ENCODE measurements at regions of chr5 and their contacts with region 1.

Region 1: DNA sequence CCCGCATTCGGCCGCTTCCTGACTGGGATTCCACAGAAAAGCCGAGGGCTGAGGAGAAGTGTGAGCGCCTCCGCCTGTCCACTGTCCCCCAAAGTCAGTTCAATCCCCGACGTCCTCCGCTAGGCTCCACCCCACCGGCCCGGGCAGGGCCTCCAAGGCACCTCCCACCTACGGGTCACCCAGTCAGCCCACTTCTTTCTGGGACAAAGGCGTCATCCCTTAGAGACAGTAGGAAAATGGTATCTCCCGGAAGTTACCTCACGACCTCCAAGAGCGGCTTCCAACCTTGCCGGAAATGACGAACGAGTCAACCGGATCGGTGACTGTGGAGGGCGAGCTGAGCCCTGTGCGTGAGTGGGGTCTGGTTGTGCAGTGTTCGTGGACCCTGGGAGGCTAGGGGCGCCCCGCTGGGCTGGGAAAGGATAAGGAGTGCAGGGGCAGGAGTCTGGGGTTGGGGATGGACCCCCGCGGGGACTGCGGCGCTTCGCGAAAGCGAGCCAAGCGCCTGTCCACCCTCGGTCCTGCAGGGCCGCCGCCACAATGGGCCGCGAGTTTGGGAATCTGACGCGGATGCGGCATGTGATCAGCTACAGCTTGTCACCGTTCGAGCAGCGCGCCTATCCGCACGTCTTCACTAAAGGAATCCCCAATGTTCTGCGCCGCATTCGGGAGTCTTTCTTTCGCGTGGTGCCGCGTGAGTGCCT is at the starts of genes GDF9 and UQCRQ:
- DNase-seq: peak; percentile 97
- H3K4me3 ChIP-seq: peak within 1 kb of the TSS; percentile 79
- H3K27me3 ChIP-seq: no peaks in the 10 kb centered on the region; the same call in 1 of the 2 replicates
- CTCF ChIP-seq: peak; percentile 47
- polyA plus RNA-seq, gene GDF9: 0.15 and 0.20 TPM in 2 replicates
- polyA plus RNA-seq, gene UQCRQ: 289 and 292 TPM in 2 replicates

Region 2: DNA sequence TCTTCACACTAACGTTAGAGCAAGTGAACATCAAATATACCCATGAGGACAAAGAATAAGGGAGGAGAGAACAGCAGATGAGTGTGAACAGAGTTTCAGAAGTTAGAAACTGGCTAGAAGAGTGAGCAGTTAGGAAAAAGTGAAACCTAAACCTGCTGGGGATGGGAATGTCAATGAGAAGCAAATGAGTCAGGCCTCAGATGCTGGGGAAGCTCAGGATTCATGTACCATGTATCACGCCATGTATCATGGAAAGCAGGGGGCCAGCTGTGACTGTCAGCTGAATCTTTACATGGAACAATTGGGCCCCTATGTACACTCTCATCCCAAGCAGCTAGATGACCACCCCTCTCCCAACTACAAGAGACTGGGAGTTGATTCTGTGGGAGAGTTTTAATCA is 16.4 kb before region 1 on chr5:
- CTCF ChIA-PET with region 1: interaction called, 15 read pairs
- POLR2A ChIA-PET with region 1: no interaction called
- DNase-seq: no peak
- H3K4me3 ChIP-seq: no peak overlapping the region
- H3K27me3 ChIP-seq: no peaks in the 10 kb centered on the region
- CTCF ChIP-seq: no peak

Region 3: DNA sequence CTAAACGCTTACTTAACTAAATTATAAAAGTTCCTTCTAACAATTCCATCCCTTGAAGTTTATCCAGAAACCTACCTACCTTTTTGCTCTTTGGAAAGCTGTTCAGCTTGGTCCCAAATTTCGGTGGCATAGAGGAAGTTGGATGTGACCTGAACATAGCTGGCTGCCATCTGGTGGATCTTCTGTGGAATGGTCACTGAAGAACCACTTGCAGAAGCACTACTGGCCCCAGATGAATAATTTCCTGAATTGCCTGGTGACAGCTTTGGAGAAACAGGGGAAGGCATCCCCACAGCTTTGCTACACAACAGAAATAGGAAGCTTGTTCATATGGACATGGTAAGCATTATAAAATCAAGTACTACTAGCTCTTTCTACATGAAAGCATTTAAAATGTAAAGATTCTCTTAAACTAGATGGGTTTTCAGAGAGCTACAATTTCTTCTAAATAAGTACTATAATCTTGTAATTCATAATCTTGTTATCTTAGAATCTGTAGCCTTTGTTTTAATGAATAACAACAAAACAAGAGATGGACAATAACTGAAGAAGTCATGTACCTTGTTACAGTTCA is 16.9 kb after region 1 on chr5:
- CTCF ChIA-PET with region 1: interaction called, 10 read pairs
- POLR2A ChIA-PET with region 1: no interaction called
- DNase-seq: no peak
- H3K4me3 ChIP-seq: no peak overlapping the region
- H3K27me3 ChIP-seq: no peaks in the 10 kb centered on the region
- CTCF ChIP-seq: peak; percentile 79

Region 4: GRCh38 chr5:133015466-133015865 is 149.0 kb after region 1 on chr5:
- CTCF ChIA-PET with region 1: no interaction called
- POLR2A ChIA-PET with region 1: no interaction called
- DNase-seq: no peak
- H3K4me3 ChIP-seq: no peak overlapping the region
- H3K27me3 ChIP-seq: no peaks in the 10 kb centered on the region
- CTCF ChIP-seq: no peak